ENCODE measurements at regions of chr12 and their contacts with region 1.

Region 1: DNA sequence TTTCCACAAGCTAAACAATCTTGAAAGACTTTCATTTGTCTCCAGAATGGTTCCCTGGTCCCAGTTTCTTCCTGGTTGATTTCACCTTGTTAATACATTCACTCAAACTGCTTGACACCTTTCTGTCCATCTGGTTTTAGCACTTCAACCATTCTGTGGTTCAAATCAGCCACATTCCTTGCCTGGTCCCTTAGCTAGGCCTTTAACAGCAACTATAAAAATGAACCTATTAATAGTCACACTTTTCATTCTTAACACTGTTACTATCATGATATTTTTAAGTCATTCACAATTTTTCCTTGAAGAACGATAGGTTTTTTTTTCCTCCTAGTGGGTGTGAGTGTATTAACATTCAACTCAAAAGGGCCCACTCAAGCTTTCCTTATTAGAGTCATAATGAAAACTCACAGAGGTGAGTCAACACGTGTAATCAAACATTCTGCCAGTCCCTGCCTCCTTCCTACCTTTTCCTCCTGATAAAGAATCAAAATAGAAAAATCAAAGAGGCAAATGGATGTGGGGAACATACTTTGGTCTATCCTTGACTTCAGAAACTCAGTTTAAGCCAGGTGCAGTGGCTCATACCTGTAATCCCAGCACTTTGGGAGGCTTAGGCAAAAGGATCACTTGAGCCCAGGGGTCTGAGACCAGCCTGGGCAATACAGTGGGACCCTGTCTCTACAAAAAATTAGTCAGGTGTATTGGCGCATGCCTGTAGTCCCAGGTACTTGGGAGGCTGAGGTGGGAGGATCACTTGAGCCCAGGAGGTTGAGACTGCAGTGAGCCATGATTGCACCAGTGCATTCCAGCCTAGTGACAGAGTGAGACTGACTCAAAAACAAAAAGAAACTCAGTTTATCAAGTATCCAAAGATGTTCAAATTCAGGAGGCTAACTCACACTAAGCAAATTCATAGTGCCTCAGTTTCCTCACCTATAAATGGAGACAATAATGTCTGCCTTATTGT is 34.5 kb upstream of the CCNT1 start:
- DNase-seq: peak; percentile 56
- H3K4me3 ChIP-seq: no peak overlapping the region
- H3K27ac ChIP-seq: no peak overlapping the region
- H3K4me1 ChIP-seq: no peaks in the 10 kb centered on the region
- H3K27me3 ChIP-seq: no peaks in the 10 kb centered on the region
- CTCF ChIP-seq: no peak

Region 2: GRCh38 chr12:48716493-48717251 is 34.4 kb before region 1 on chr12 and contains the start of gene CCNT1:
- CTCF ChIA-PET with region 1: no interaction called
- dilution Hi-C with region 1: no loop called
- in situ Hi-C with region 1: no loop called
- intact Hi-C with region 1: loop called (anchors 5 kb)
- DNase-seq: peak; percentile 100
- H3K4me3 ChIP-seq: peak within 1 kb of the TSS; percentile 84 to 99 (median 88)
- H3K27ac ChIP-seq: peak within 1 kb of the TSS; percentile 92
- H3K4me1 ChIP-seq: peaks cover 21% of the 10 kb centered on the region
- H3K27me3 ChIP-seq: no peaks in the 10 kb centered on the region
- CTCF ChIP-seq: peak in 1 of 2 donors; percentile 35
- total RNA-seq, gene CCNT1: 31.5 to 49.1 TPM

Region 3: DNA sequence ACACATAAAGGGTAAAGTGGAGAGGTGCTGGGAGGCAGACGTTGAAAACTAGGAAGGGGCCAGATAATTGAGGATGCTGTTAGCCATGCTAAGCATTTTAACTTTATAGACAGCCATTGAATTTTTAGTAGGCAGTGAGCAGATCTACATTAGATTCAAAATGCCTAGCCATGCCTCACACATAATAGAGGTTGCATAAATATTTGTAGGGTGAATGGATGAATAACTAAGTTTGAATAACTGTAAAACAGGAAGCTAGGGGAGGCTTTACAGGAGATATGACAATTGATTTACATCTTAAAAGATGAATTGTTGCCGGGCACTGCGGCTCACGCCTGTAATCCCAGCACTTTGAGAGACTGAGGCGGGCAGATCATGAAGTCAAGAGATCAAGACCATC is 22.2 kb before region 1 on chr12:
- CTCF ChIA-PET with region 1: no interaction called
- dilution Hi-C with region 1: no loop called
- in situ Hi-C with region 1: no loop called
- intact Hi-C with region 1: no loop called
- DNase-seq: no peak
- H3K4me3 ChIP-seq: no peak overlapping the region
- H3K27ac ChIP-seq: no peak overlapping the region
- H3K4me1 ChIP-seq: no peaks in the 10 kb centered on the region
- H3K27me3 ChIP-seq: no peaks in the 10 kb centered on the region
- CTCF ChIP-seq: no peak

Measured in mammary epithelial cell (primary cell).